Activated CD4-positive, alpha-beta T cell treated with anti-CD3 and anti-CD28 coated beads, Interleukin-2, amount 10 ng/mL, durations not matched to agents 24 days and 14 days (primary cell): ENCODE measurements at regions of chrX and their contacts with region 1.

Region 1: GRCh38 chrX:40097497-40098263 is at the start of gene BCOR:
- DNase-seq: peak; percentile 90
- H3K4me3 Mint-ChIP-seq: peak within 1 kb of the TSS; percentile 97
- H3K27ac Mint-ChIP-seq: peak within 1 kb of the TSS; percentile 92
- H3K4me1 Mint-ChIP-seq: peaks cover 25% of the 10 kb centered on the region
- H3K27me3 Mint-ChIP-seq: no peaks in the 10 kb centered on the region
- total RNA-seq, gene BCOR: 61.0 and 64.5 TPM in 2 replicates

Region 2: DNA sequence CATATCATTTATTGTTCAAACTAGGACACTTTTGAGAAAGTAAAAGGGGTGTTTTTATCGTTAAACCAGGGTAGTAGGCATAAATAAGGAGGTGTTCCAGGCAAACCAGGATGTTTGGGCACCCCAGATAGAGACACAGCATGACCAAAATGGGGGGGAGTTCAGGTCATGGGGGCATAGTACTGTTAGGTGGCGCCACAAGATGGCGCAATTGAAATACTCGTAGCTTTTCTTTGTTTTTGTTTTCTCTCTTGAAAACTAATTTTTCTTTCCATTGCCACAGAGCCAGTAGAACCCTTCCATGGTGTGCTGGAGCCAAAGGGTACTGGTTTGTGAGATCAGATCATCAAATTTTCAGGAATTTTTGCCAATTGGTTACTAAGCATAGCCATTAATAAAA is 283.3 kb before region 1 on chrX:
- intact Hi-C with region 1: loop called (anchors 5 kb)
- DNase-seq: peak; percentile 80
- H3K4me3 Mint-ChIP-seq: no peak overlapping the region
- H3K27ac Mint-ChIP-seq: no peak overlapping the region
- H3K4me1 Mint-ChIP-seq: peaks cover 30% of the 10 kb centered on the region
- H3K27me3 Mint-ChIP-seq: no peaks in the 10 kb centered on the region

Region 3: DNA sequence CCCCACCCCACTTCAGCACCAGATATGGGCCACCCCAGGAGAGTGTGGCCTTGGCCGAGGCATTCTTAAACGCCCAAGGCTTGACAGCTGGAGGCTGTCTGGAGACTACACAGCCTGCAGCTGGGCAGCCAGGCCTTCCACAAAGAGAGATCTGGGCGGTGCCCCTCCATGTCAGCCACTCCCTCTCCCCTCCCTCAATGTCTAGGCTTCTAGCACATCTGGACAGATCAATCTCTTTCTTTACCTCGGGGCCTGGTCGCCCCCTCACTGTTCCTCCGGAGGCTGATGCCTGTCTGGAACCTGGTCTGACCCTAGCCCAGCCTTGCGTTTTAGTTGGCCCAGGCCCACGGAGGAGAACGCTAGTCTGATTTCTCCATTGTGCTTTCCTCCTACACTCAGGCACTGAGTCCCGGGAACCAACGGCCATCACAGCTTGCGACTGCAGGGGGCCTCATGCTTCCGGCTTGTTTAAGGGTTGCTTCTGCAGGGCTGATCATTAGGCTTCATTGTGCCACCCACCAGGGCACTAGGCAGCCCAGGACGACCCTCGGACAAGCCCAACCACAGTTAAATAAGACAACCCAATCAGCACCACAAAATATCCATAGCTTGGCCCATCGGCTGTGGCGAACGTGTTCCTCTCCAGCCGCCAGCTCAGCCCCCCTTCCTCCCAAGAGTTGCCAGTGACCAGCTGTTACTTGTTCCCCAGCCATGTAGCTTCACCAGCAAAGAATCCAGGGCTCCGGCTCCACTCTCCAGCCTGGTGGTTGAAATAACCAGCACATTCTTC is 200.5 kb before region 1 on chrX:
- intact Hi-C with region 1: no loop called
- DNase-seq: no peak
- H3K4me3 Mint-ChIP-seq: no peak overlapping the region
- H3K27ac Mint-ChIP-seq: no peak overlapping the region
- H3K4me1 Mint-ChIP-seq: peaks cover 5% of the 10 kb centered on the region
- H3K27me3 Mint-ChIP-seq: peaks cover 2% of the 10 kb centered on the region

Region 4: GRCh38 chrX:40013266-40014195 is 84.1 kb before region 1 on chrX:
- intact Hi-C with region 1: loop called (anchors 2 kb)
- DNase-seq: peak; percentile 86
- H3K4me3 Mint-ChIP-seq: peak overlapping the region; percentile 80
- H3K27ac Mint-ChIP-seq: peak overlapping the region; percentile 88
- H3K4me1 Mint-ChIP-seq: peaks cover 18% of the 10 kb centered on the region
- H3K27me3 Mint-ChIP-seq: peaks cover 11% of the 10 kb centered on the region

Region 5: GRCh38 chrX:40153335-40154249 is 55.9 kb after region 1 on chrX:
- intact Hi-C with region 1: loop called (anchors 2 kb)
- DNase-seq: peak; percentile 87
- H3K4me3 Mint-ChIP-seq: peak overlapping the region; percentile 83
- H3K27ac Mint-ChIP-seq: peak overlapping the region; percentile 80
- H3K4me1 Mint-ChIP-seq: peaks cover 12% of the 10 kb centered on the region
- H3K27me3 Mint-ChIP-seq: peaks cover 2% of the 10 kb centered on the region

Region 6: GRCh38 chrX:40175511-40176350 is 78.1 kb after region 1 on chrX:
- intact Hi-C with region 1: loop called (anchors 2 kb)
- DNase-seq: peak; percentile 92
- H3K4me3 Mint-ChIP-seq: peak overlapping the region; percentile 93
- H3K27ac Mint-ChIP-seq: peak overlapping the region; percentile 99
- H3K4me1 Mint-ChIP-seq: peaks cover 25% of the 10 kb centered on the region
- H3K27me3 Mint-ChIP-seq: no peaks in the 10 kb centered on the region

Region 7: DNA sequence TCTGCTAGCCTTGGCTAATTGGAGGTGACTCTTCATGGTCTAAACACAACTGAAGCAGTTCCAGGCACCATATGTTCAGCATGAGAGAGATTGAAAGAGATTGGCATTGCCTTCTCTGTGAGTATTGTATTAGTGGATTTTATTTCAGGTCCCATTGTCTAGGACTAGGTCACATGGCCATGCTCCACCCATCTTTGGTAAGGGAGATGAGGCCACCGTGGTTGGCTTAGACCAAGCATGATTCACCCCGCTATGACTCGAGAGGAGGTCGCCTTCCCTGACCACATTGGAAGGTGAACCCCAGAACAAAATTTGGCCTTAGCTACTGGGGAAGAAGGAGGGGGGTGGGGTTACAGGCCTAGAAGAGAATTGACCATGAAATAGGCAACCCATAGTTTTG is 109.9 kb after region 1 on chrX:
- intact Hi-C with region 1: no loop called
- DNase-seq: peak; percentile 59
- H3K4me3 Mint-ChIP-seq: no peak overlapping the region
- H3K27ac Mint-ChIP-seq: no peak overlapping the region
- H3K4me1 Mint-ChIP-seq: peaks cover 8% of the 10 kb centered on the region
- H3K27me3 Mint-ChIP-seq: no peaks in the 10 kb centered on the region